WTC11 (cell line): ENCODE measurements at regions of chr6 and their contacts with region 1.

Region 1: DNA sequence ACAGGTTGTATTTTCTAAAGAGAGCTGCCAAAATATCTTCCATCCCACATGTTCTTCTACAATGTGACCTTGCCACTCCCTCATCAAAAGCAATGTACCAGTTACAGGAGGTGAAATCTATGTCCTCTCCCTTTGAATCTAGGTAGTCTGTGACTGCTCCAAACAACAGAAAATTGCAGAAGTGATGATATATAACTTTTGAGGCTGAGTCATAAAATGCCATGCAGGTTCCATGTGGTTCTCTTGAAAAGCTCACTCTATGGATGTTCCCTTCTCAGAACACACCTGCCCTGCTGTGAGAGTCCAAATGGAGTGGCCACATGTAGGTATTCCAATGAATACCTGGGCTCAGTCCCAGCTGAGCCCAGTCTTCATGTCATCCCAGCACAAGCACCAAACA is 16.9 kb upstream of the PHIP start:
- DNase-seq: no peak
- ATAC-seq: no peak
- H3K4me3 Mint-ChIP-seq: no peak overlapping the region
- H3K27ac Mint-ChIP-seq: no peak overlapping the region; the same call in 1 of the 2 replicates
- H3K4me1 Mint-ChIP-seq: no peaks in the 10 kb centered on the region
- H3K27me3 Mint-ChIP-seq: peaks cover 5% of the 10 kb centered on the region
- CTCF ChIP-seq: no peak

Region 2: GRCh38 chr6:79145301-79145700 is 50.4 kb after region 1 on chr6:
- CTCF ChIA-PET with region 1: no interaction called
- POLR2A ChIA-PET with region 1: no interaction called
- DNase-seq: no peak
- ATAC-seq: no peak
- H3K4me3 Mint-ChIP-seq: no peak overlapping the region
- H3K27ac Mint-ChIP-seq: no peak overlapping the region
- H3K4me1 Mint-ChIP-seq: peaks cover 13% of the 10 kb centered on the region
- H3K27me3 Mint-ChIP-seq: no peaks in the 10 kb centered on the region
- CTCF ChIP-seq: no peak

Region 3: GRCh38 chr6:79250107-79250514 is 155.2 kb after region 1 on chr6:
- CTCF ChIA-PET with region 1: interaction called, 10 read pairs
- POLR2A ChIA-PET with region 1: no interaction called
- DNase-seq: no peak
- ATAC-seq: peak; percentile 66
- H3K4me3 Mint-ChIP-seq: no peak overlapping the region
- H3K27ac Mint-ChIP-seq: no peak overlapping the region
- H3K4me1 Mint-ChIP-seq: peaks cover 3% of the 10 kb centered on the region; the same call in 1 of the 2 replicates
- H3K27me3 Mint-ChIP-seq: 0 out of 2 replicates have a peak, but pooled peaks cover 2% of the 10 kb centered on the region
- CTCF ChIP-seq: no peak